ENCODE measurements at regions of chr17 and their contacts with region 1.

Region 1: GRCh38 chr17:81566461-81567126 is 14.4 kb upstream of the FAAP100 start:
- DNase-seq: peak; percentile 90
- H3K4me3 ChIP-seq: peak overlapping the region in 3 of 4 donors; percentile 22 to 33 (median 23)
- H3K27ac ChIP-seq: peak overlapping the region; percentile 76 to 86 (median 84)
- H3K4me1 ChIP-seq: peaks cover 0 to 50% (median 40%) of the 10 kb centered on the region in 4 donors
- H3K27me3 ChIP-seq: no peaks in the 10 kb centered on the region
- CTCF ChIP-seq: no peak
- EP300 ChIP-seq: no peak
- POLR2A ChIP-seq: no peak

Region 2: GRCh38 chr17:81508639-81509206 is 57.9 kb before region 1 on chr17:
- intact Hi-C with region 1: no loop called
- DNase-seq: peak; percentile 61
- H3K4me3 ChIP-seq: peak overlapping the region; percentile 88 to 99 (median 94)
- H3K27ac ChIP-seq: peak overlapping the region; percentile 99 to 100 (median 100)
- H3K4me1 ChIP-seq: peaks cover 0 to 27% (median 12%) of the 10 kb centered on the region in 4 donors
- H3K27me3 ChIP-seq: no peaks in the 10 kb centered on the region
- CTCF ChIP-seq: no peak
- EP300 ChIP-seq: no peak
- POLR2A ChIP-seq: no peak

Region 3: GRCh38 chr17:81553018-81553615 is 13.5 kb before region 1 on chr17:
- intact Hi-C with region 1: loop called (anchors 2 kb)
- DNase-seq: peak; percentile 81
- H3K4me3 ChIP-seq: peak overlapping the region; percentile 73 to 90 (median 81)
- H3K27ac ChIP-seq: peak overlapping the region; percentile 84 to 89 (median 85)
- H3K4me1 ChIP-seq: peaks cover 0 to 39% (median 26%) of the 10 kb centered on the region in 4 donors
- H3K27me3 ChIP-seq: no peaks in the 10 kb centered on the region
- CTCF ChIP-seq: no peak
- EP300 ChIP-seq: no peak
- POLR2A ChIP-seq: no peak

Region 4: DNA sequence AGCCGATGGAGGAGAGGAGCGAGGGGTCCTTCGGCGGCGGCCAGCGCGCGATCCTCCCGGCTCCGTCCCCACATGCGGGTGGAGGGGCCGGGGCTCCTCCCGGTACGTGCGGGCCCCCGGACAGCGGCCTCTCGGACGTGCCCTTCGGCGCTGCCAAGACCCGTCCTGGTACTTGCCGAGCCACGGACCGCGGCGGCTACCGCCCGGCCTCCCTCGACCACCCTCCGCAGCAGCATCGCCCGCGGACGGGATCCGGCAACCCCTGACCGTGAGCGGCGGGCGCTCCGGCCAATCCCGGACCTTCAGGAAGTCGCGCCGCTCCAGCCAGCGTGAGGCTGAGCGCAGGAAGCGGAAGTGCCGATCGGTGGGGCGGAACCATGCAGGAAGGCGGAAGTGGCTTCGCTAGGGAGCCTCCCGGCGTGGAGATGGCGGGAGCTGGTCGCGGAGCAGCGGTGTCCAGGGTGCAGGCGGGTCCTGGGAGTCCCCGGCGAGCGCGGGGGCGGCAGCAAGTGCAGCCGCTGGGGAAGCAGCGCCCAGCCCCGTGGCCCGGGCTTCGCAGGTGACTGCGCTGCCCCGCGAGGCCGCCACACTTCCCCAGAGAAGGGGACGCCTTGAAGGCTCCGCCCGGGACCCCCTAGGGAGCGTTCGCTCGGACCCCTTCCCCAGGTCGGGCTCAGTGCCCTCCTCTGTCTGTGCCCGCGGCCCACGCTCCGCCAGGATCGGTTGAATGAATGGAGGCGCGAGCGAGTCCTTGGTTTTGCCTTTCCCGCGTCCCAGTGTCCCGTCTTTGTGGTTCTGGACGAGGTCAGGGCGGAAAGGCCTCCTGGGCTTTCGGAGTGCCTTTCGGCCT is 100.0 kb after region 1 on chr17 and contains the starts of genes CCDC137 and OXLD1:
- intact Hi-C with region 1: no loop called
- DNase-seq: peak; percentile 98
- H3K4me3 ChIP-seq: peak within 1 kb of the TSS; percentile 70 to 95 (median 84)
- H3K27ac ChIP-seq: peak within 1 kb of the TSS; percentile 83 to 96 (median 91)
- H3K4me1 ChIP-seq: peaks cover 0 to 27% (median 26%) of the 10 kb centered on the region in 4 donors
- H3K27me3 ChIP-seq: no peaks in the 10 kb centered on the region
- CTCF ChIP-seq: no peak
- EP300 ChIP-seq: no peak
- POLR2A ChIP-seq: peak; percentile 65 to 85
- total RNA-seq, gene CCDC137: 5.5 to 10.7 (median 9.0) TPM
- total RNA-seq, gene OXLD1: 14.4 to 36.2 (median 26.8) TPM

Measured in sigmoid colon (tissue), 7 donors.